GM13976 (cell line): ENCODE measurements at regions of chr1 and their contacts with region 1.

Region 1: DNA sequence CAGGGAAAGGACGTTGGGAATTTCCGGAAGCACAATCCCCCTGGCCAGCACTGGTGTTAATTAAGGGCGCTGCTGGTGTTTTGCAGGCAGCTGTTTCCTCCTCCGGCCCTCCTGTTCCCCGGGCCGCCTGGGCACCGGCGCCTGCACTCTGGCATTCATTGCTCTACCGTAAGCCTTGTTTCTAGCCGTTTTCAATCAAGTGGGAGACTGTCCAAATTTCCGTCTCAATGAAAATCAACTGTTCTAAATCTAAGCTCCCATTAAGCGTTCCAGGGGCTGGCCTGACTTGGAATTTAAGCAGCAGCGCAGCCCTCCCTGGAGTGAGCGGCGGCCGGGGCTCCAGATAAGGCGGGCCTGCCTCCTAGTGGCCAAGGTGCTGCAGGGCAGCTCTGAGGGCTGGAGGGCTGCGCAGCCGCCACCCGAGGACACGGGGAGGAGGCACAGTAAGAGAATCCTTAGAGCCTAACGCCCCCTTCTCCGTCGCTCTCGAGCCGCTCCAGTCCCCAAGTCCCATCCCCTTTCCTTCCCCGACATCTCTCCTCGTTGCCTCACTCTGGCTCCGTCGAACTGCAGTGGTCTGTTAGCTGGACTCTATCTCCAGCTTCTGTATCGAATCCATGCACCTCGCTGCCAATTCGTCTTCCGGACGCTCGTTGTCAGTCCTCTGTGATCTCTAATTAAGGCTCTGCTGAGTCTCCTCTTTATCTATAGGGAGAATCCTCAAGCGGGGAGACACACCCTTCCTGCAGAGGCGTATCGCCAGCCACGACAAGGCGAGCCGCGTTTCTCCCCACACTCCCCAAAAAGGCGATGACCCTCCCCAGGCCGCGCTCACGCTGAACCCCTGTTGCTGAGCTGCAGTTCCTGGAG is 57.8 kb upstream of the LRRC8D start:
- DNase-seq: peak; percentile 89
- CTCF ChIP-seq: peak; percentile 99

Region 2: DNA sequence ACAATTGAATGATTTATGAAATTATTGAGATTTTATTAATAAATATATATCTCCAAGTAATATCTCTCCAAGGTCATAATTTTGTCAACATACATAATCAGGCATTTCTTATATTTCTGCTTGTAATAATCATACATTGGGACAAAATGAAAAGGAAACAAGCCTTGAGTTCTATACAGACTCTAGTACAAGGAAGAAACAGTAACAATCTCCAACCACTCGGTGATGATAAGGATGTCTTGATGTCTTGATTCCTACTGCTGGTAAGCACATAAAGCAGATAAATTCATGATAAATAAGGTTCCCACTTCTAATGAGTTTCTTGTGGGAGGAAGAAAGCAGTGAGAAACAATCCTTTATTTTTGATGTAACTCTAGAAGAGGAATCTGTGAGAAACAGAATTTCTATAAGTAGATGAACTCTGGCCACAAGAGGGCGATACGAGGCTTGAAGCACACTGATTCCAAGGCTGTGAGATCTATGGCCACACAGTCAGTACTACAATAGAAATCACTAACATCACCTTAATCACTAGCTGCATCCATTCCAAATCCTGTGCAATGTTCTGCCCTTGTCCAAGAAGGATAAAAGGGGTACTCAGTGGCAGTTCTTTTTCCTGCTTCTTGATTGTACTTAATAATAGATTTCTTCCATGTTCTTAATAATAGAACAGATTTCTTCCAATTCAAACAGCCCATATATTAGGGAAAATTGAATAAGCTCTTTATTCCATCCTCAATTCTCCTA is 279.8 kb before region 1 on chr1:
- in situ Hi-C with region 1: loop called (anchors 10 kb)
- DNase-seq: peak; percentile 62
- CTCF ChIP-seq: peak; percentile 64

Region 3: DNA sequence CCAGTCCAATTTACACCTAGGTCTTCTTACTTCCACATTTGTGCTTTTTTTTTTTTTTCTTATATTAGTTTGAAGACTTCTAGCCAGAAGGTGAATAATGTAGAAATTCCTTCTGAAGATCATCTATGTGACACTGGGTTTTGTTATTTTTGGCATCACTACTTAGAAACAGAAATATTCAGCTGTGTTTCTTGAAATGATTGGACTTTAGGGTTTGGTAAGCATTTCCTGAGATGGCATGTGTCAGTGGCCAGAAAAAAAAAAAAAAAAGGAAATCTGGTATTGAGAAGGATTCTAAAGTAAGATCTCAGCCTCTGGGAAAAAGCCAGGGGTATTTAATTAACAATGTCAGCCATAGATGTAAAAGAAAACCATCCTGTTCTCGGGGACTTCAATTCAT is 173.5 kb before region 1 on chr1:
- in situ Hi-C with region 1: no loop called
- DNase-seq: no peak
- CTCF ChIP-seq: no peak

Region 4: GRCh38 chr1:89632657-89633247 is 130.3 kb before region 1 on chr1 and contains the start of gene LRRC8C:
- in situ Hi-C with region 1: loop called (anchors 10 kb)
- DNase-seq: peak; percentile 91
- CTCF ChIP-seq: peak; percentile 90

Region 5: DNA sequence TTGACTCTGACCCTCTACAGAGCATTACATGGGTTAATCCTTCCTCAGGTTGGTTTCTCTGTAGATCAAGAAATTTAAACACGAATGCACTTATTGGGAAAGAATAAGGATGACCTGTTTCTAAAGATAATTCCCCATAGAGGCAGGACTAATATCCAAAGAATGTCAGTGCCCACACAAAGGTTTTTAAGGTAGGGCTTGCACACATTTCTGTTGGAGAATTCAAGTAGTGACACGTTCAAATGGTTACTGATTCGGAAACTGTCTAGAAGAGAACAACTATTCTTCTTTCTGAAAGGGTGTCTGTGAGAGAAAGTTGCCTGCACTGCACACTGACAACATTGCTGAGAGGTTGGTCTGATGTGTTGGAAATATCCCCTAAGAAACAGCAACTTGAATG is 399.2 kb after region 1 on chr1:
- in situ Hi-C with region 1: no loop called
- DNase-seq: no peak
- CTCF ChIP-seq: no peak